Dorsolateral prefrontal cortex (tissue), 120 donors: ENCODE measurements at regions of chr2 and their contacts with region 1.

Region 1: GRCh38 chr2:196592912-196593881 is 46.3 kb upstream of the CCDC150 start:
- DNase-seq: peak; percentile 57 to 83 (median 67)
- H3K4me3 ChIP-seq: peak within 1 kb of the TSS; percentile 59 to 91 (median 76)
- H3K27ac ChIP-seq: peak within 1 kb of the TSS; percentile 89 to 99 (median 97)
- H3K27me3 ChIP-seq: peaks cover 0 to 4% (median 0%) of the 10 kb centered on the region in 45 donors
- CTCF ChIP-seq: peak in 53 of 56 donors; percentile 11 to 65 (median 40)

Region 2: DNA sequence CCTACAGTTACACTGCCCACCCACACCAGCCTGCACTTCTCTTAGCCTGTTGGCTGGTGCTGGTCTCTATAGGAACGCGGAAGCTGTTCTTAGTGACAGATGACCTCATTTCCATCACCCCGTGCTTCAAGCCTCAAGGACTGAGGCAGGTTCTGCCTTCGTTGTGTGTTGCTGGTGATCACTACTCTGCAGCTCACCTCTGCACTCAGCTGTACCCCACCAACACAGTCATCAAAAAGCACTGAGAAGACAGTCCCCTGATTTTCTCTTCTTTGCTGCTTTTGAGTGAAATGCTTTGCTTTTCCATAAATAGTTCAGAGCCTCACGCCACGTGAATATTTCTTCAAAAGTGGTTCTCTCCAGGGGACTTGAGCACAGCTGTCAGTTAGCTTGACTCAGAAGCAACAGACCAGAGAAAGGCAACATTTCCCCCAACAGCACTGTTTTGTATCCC is 179.3 kb before region 1 on chr2:
- intact Hi-C with region 1: loop called in 1 of 2 experiments (anchors 10 kb)
- DNase-seq: peak in 5 of 10 donors; percentile 10 to 61 (median 45)
- H3K4me3 ChIP-seq: peak overlapping the region in 1 of 59 donors; percentile 3
- H3K27ac ChIP-seq: peak overlapping the region in 51 of 59 donors; percentile 3 to 82 (median 60)
- H3K27me3 ChIP-seq: no peaks in the 10 kb centered on the region
- CTCF ChIP-seq: no peak

Region 3: DNA sequence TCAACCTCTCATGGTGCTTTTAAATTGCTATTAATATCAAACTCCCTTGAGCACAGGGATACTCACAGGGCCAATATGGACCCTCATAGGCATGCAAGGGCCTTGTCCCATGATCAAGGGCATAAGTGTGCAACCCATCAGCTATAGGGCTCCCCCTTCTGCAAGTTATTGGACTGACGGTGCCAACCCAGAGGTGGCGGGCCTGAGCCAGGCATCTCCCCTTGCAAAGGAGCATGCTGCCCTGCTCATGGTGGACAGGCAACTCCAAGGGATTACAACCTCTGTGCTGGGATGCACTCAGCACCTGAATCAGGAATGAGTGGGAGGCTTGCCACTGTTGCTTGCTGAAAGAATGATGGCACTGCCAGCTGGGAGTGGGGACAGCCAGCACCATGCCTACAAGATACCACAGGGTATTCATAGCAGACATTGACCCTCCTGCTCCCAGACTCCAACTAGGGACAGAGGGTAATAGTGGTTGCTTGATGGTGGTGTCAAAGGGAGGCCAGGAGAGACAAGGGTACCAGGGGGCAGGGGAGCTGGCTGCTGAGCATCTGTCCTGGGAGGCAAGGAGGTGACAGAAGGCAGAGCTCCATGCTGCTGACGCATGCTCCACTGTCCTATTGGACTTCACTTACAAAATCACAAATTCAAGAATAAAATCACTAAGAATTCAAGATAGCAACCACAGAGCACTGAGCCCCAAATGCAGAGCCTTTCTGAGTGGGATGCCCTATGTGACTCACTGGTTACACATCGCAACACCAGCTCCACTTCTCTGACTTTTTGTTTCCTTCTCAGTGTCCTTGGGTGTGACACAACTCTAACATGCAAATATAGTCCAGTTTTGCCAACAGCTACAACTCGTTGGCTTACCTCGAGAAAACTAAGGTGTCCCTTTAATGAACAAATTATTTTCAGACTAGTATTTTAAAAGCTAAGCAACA is 110.8 kb before region 1 on chr2:
- intact Hi-C with region 1: loop called in 1 of 2 experiments (anchors 5 kb)
- DNase-seq: peak in 2 of 10 donors; percentile 17 to 50
- H3K4me3 ChIP-seq: no peak overlapping the region
- H3K27ac ChIP-seq: peak overlapping the region in 18 of 59 donors; percentile 6 to 52 (median 30)
- H3K27me3 ChIP-seq: no peaks in the 10 kb centered on the region
- CTCF ChIP-seq: no peak

Region 4: DNA sequence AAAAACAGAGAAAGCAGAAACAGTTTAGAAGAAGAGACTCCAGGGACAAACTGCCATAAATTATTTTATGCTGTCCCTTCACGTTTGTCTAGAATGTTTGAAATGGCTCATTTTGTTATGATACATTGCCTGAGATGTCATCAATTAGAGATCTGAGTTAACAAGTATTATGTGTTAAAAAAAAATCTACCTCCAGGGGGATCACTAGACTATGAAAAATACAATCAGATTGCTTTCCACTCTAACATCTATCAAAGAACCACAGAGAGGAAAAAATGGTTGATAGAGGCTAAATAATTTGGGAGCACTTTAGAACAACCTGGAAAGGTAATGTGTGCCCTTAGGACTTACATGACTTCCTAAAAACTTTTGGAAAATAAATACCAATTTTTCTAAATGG is 57.5 kb before region 1 on chr2:
- intact Hi-C with region 1: loop called (anchors 2 to 5 kb)
- DNase-seq: no peak
- H3K4me3 ChIP-seq: no peak overlapping the region
- H3K27ac ChIP-seq: peak overlapping the region in 56 of 59 donors; percentile 14 to 90 (median 77)
- H3K27me3 ChIP-seq: no peaks in the 10 kb centered on the region
- CTCF ChIP-seq: peak in 36 of 56 donors; percentile 14 to 63 (median 38)

Region 5: DNA sequence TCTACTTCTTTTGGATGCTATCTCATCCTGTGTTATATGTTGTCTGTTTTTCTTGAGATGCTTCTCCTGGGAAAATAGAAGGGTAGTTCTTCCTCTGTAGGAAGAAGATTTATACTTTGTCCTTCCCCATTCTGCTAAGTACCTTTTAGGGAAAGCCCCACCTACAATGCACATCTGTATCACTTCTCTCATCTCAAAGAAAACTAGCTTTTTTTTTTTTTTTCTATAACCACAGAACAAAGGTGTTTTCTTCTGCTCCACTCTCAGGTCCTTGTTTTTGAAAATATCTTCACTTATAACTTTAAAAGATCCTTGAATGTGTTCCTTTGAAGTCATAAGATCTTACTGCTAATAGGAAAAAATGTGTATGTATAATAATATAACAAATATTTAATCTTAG is 77.1 kb after region 1 on chr2:
- intact Hi-C with region 1: no loop called
- DNase-seq: no peak
- H3K4me3 ChIP-seq: no peak overlapping the region
- H3K27ac ChIP-seq: no peak overlapping the region
- H3K27me3 ChIP-seq: no peaks in the 10 kb centered on the region
- CTCF ChIP-seq: no peak

Region 6: DNA sequence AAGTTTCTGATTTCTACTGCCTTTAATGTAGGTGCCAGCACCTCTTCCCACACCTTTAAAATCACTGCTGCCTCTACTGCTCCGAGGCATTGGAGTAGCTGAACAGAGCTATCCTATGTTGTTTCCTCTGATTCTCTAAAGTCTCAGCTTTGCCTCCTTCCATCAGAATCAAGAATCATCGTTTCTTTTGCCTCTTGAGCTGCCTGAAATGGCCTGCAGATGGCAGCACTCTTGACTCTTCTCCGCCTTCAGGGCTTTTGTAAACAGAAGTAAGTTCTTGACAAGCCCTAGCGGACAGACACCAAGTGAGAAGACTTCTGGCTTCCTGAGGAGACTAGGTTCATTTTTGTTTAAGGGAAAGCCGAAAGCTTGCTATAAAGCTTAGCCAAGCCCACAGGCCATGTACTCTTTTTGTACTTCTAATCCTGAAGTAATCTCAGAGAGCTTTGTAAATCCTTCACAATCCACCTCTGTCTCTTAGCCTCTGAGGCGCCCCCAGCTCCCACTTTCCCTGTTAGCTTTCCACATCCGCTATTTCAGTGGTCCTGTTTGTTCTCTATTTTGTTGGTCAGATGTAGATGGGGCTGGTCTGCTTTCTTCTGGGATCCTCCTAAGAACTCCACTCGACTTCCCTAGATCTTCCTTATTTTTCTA is 157.9 kb after region 1 on chr2:
- intact Hi-C with region 1: loop called in 1 of 2 experiments (anchors 5 kb)
- DNase-seq: peak in 8 of 10 donors; percentile 16 to 60 (median 46)
- H3K4me3 ChIP-seq: no peak overlapping the region
- H3K27ac ChIP-seq: no peak overlapping the region
- H3K27me3 ChIP-seq: no peaks in the 10 kb centered on the region
- CTCF ChIP-seq: peak; percentile 39 to 82 (median 71)